ENCODE measurements at regions of chr12 and their contacts with region 1.

Region 1: GRCh38 chr12:89762498-89763188 is 54.0 kb upstream of the ATP2B1 start:
- DNase-seq: no peak
- H3K4me3 ChIP-seq: no peak overlapping the region
- H3K27ac ChIP-seq: no peak overlapping the region
- H3K27me3 ChIP-seq: no peaks in the 10 kb centered on the region
- CTCF ChIP-seq: no peak

Region 2: DNA sequence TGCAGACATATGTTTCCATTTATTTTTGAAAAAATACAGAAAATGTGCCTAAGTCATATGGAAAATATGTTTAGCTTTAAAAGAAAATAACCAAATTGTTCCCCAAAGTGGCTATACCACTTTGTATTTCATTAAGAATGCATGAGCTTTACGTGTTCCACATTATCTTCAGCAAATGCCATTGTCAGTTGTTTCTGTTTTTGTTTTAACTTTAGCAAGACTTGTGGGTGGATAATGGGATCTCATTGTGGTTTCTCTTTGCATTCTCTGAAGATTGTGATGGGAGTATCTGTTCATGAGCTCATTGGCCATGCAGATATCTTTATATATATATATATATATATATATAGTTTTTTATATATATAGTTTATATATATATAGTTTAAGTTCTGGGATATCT is 1010.8 kb after region 1 on chr12:
- intact Hi-C with region 1: loop called in 1 of 2 experiments (anchors 5 kb)
- DNase-seq: no peak
- H3K4me3 ChIP-seq: no peak overlapping the region
- H3K27ac ChIP-seq: no peak overlapping the region
- H3K27me3 ChIP-seq: no peaks in the 10 kb centered on the region
- CTCF ChIP-seq: no peak